ENCODE measurements at regions of chr13 and their contacts with region 1.

Region 1: DNA sequence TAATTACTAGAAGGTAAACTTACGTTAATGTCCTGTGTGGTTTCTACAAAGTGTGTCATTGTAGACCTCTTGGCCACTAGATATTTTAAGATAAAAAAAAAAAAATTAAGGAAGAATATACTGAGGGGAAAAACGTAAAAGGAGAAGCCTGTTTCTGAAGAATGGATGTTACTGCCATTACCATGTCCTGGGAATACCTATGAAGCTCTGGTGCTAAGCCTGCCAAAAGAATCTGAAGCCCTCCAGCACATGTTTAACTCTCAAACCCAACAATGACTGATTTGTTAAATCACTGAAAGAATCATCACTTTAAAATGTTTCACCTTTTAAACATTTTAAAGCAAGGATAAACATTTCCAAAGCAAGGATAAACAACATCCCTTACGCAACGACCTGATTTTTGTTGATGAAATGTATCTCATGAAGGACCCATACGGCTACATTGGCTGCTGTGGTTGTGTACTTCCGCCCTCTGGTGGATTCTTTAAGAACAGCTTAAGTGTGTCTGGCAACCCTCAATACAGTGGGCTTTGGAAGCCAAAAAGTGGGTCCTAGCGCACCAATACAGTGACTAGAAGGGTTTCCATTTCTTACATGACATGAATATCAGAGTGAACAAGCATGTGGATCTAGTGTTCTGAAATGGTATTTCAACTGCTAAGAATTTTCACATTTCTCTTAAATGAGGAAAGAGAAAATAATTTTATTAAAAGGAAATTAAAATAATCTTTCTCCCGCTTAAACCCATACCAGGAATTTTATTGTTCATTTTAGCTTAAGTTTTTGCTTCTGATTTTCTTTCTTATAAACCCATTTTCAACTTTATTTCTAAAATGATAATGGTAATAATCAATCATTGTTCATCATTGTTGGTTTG is 74.5 kb upstream of the RAP2A start:
- DNase-seq: peak; percentile 64
- ATAC-seq: peak; percentile 88
- H3K4me3 Mint-ChIP-seq: no peak overlapping the region
- H3K27ac Mint-ChIP-seq: no peak overlapping the region
- H3K4me1 Mint-ChIP-seq: no peaks in the 10 kb centered on the region
- H3K27me3 Mint-ChIP-seq: no peaks in the 10 kb centered on the region

Region 2: GRCh38 chr13:97344265-97345175 is 14.9 kb before region 1 on chr13:
- CTCF ChIA-PET with region 1: interaction called, 10 read pairs
- POLR2A ChIA-PET with region 1: no interaction called
- DNase-seq: peak; percentile 61
- ATAC-seq: peak; percentile 67
- H3K4me3 Mint-ChIP-seq: no peak overlapping the region
- H3K27ac Mint-ChIP-seq: no peak overlapping the region
- H3K4me1 Mint-ChIP-seq: no peaks in the 10 kb centered on the region
- H3K27me3 Mint-ChIP-seq: no peaks in the 10 kb centered on the region